HCT116 (cell line): ENCODE measurements at regions of chr5 and their contacts with region 1.

Region 1: DNA sequence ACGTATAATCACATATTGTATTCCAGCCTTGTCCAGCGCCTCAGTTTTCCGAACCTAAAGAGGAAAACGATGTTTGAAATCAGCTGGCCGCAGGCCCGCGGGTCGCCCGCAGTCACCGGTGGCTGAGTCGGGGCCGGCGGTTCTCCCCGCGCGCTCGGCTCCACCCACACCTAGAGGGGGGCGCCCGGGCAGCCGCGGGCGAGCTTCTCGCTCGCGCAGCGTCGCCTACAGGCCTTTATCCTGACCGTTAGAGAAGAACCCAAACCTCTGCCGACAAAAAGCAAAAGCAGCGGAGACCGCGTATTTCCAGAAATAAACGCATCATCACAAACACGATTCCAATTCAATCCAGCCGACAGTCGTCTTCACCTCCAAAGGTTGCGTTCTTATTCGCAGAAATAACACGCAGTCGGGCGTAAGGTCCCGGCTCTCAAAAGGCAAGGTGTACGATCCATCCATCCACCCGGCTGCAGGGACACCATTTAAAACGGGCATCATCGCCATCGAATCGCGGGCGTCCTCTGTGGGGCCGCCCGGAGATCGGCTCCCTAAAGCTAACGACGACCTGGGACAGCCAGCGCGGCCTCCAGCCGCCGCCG is 680 bp upstream of the NIPBL start:
- DNase-seq: peak; percentile 51
- ATAC-seq: peak; percentile 74
- H3K4me3 ChIP-seq: peak overlapping the region; percentile 80 to 91
- H3K27ac ChIP-seq: peak overlapping the region; percentile 97
- H3K4me1 ChIP-seq: peaks cover 15 to 23% of the 10 kb centered on the region in 2 experiments; a peak in 3 of 4 replicates
- H3K27me3 ChIP-seq: no peaks in the 10 kb centered on the region
- CTCF ChIP-seq: peak; percentile 33 to 55 (median 45); a peak in 4 of 6 replicates
- POLR2A ChIP-seq: peak; percentile 22
- RAD21 ChIP-seq: peak; percentile 49; the same call in 1 of the 2 replicates

Region 2: DNA sequence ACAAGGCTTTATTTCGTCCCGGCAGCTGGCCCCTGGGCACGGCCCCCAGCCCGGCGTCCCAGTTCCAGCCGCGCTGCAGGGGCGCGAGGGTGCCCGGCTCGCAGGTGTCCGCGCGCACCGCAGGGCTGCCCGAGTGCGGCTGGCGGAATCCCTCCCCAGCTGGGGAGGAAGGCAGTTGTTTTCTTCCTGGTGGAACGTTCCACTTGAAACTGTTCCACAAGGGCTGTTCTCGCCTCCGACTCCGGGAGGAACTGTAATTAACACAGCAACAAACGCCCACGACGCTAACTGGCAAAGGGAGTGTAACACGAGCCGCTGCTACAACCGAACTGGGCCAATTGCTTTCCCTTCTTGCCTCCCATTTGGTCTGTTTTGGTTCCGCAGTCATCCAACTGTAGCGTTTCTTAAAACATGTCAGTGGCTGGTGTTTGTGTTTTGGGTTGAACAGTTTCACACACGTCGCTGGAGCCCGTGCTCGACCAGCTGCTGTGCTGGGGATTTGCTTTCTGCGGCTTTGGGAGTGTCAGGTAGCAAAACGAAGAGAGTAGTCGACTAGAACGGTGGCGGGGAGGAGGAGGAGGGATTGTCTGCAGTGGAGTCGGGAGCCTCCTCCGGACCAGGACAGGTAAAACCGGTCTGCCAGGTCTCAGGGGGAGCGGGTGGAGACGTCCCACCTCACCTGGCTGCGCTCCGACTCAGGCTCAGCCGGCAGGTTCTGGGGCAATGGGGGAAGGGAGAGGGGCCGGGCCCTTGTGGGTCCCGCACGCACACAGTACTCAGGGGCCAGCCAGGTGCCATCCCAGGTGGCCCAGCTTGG is 130.9 kb before region 1 on chr5:
- CTCF ChIA-PET with region 1: interaction called, 23 read pairs
- POLR2A ChIA-PET with region 1: no interaction called
- RAD21 ChIA-PET with region 1: no interaction called
- intact Hi-C with region 1: loop called (anchors 2 kb)
- DNase-seq: peak; percentile 63
- ATAC-seq: peak; percentile 80
- H3K4me3 ChIP-seq: peak overlapping the region; percentile 60 to 74
- H3K27ac ChIP-seq: peak overlapping the region; percentile 87
- H3K4me1 ChIP-seq: peaks cover 13 to 24% of the 10 kb centered on the region in 2 experiments
- H3K27me3 ChIP-seq: no peaks in the 10 kb centered on the region
- CTCF ChIP-seq: peak in 1 of 3 experiments; percentile 19; a peak in 2 of 6 replicates
- POLR2A ChIP-seq: no peak
- RAD21 ChIP-seq: no peak; the same call in 1 of the 2 replicates

Region 3: GRCh38 chr5:36944607-36945225 is 68.8 kb after region 1 on chr5:
- CTCF ChIA-PET with region 1: interaction called, 3 read pairs
- POLR2A ChIA-PET with region 1: no interaction called
- RAD21 ChIA-PET with region 1: no interaction called
- intact Hi-C with region 1: loop called (anchors 5 kb)
- DNase-seq: peak; percentile 51
- ATAC-seq: no peak
- H3K4me3 ChIP-seq: no peak overlapping the region
- H3K27ac ChIP-seq: no peak overlapping the region
- H3K4me1 ChIP-seq: peaks cover under 1 to 3% of the 10 kb centered on the region in 2 experiments; a peak in 3 of 4 replicates
- H3K27me3 ChIP-seq: no peaks in the 10 kb centered on the region
- CTCF ChIP-seq: peak; percentile 15 to 68 (median 36); a peak in 4 of 6 replicates
- POLR2A ChIP-seq: no peak
- RAD21 ChIP-seq: peak; percentile 26; the same call in 1 of the 2 replicates

Region 4: DNA sequence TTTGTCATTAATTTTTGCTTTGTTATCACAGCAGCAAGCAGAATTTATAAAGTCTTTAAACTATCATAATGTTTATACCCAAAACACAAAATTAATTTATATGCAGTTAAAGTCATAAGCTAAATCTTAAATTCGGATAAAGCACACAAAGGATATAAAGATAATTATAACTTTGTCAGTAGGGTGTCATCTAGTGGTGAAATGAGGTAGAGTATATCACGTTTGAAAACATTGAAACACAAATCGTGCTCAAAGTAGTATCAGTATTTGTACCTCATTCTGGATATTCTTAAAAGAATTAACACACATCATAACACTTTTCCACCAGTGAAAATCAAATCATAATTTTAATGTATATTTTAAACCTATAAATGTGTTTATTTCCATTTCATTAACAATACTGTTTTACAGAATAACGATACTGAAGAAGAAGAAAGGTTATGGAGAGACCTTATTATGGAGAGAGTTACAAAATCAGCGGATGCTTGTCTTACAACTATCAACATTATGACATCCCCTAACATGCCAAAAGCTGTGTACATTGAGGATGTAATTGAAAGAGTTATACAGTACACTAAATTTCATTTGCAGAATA is 130.2 kb after region 1 on chr5:
- CTCF ChIA-PET with region 1: no interaction called
- POLR2A ChIA-PET with region 1: no interaction called
- RAD21 ChIA-PET with region 1: no interaction called
- intact Hi-C with region 1: loop called (anchors 10 kb)
- DNase-seq: peak; percentile 7
- ATAC-seq: peak; percentile 52; the same call in 1 of the 2 replicates
- H3K4me3 ChIP-seq: no peak overlapping the region
- H3K27ac ChIP-seq: no peak overlapping the region
- H3K4me1 ChIP-seq: no peaks in the 10 kb centered on the region
- H3K27me3 ChIP-seq: no peaks in the 10 kb centered on the region
- CTCF ChIP-seq: peak; percentile 44 to 71 (median 49); a peak in 5 of 6 replicates
- POLR2A ChIP-seq: no peak
- RAD21 ChIP-seq: peak; percentile 49